Cardiac septum (tissue), 1 donor: ENCODE measurements at regions of chr2 and their contacts with region 1.

Region 1: GRCh38 chr2:126971481-126972278 is 73.0 kb downstream of the TEX51 start:
- DNase-seq: no peak

Region 2: GRCh38 chr2:125745514-125745913 is 1226.2 kb before region 1 on chr2:
- intact Hi-C with region 1: loop called (anchors 10 kb)
- DNase-seq: no peak

Region 3: GRCh38 chr2:127288274-127288673 is 316.6 kb after region 1 on chr2:
- intact Hi-C with region 1: no loop called
- DNase-seq: no peak